IMR-90 (cell line): ENCODE measurements at regions of chr11 and their contacts with region 1.

Region 1: DNA sequence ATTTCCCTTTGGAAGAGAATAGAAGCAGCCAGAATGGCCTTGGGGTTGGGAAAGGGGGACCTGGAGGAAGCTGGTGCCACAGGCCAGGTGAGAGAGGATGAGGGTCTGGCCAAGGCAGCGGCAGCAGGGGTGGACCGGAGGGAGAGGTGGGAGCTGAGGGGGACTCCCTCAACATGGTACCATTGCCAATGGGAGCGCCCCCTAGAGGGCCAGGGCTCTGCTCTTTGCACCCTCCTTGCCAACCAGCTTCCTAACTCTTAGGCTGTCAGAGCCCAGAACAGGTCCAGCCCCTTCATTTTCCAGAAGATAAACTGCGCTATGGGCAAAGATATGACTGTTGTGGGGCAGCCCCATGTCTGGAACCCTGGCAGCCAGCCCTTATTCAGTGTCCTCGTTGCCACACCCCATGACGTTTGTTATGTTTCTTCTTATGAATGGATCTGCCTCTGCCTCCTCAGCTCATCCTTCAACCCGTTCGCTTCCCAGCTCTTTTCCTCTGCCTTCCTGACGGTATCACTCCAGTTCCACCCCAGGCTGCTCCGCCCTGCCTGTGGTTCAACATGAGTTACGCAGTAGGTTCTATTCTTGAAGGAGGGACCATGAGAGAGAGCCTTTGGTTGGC is 185.2 kb downstream of the GRIK4 start:
- DNase-seq: no peak
- ATAC-seq: no peak
- H3K4me3 ChIP-seq: no peak overlapping the region
- H3K27ac ChIP-seq: no peak overlapping the region
- H3K4me1 ChIP-seq: no peaks in the 10 kb centered on the region
- H3K27me3 ChIP-seq: peaks cover 14% of the 10 kb centered on the region
- CTCF ChIP-seq: no peak
- POLR2A ChIP-seq: no peak
- RAD21 ChIP-seq: no peak

Region 2: GRCh38 chr11:120303004-120303637 is 393.6 kb before region 1 on chr11:
- CTCF ChIA-PET with region 1: no interaction called
- POLR2A ChIA-PET with region 1: no interaction called
- dilution Hi-C with region 1: no loop called
- in situ Hi-C with region 1: loop called (anchors 25 kb)
- intact Hi-C with region 1: no loop called
- DNase-seq: peak; percentile 80
- ATAC-seq: peak; percentile 74
- H3K4me3 ChIP-seq: no peak overlapping the region
- H3K27ac ChIP-seq: no peak overlapping the region
- H3K4me1 ChIP-seq: peaks cover 6% of the 10 kb centered on the region; the same call in 1 of the 2 replicates
- H3K27me3 ChIP-seq: peaks cover 16% of the 10 kb centered on the region
- CTCF ChIP-seq: peak; percentile 99
- POLR2A ChIP-seq: no peak
- RAD21 ChIP-seq: peak; percentile 75